Activated CD4-positive, alpha-beta T cell treated with anti-CD3 and anti-CD28 coated beads, Interleukin-2, amount 10 ng/mL, durations not matched to agents 24 days and 14 days (primary cell): ENCODE measurements at regions of chr2 and their contacts with region 1.

Region 1: DNA sequence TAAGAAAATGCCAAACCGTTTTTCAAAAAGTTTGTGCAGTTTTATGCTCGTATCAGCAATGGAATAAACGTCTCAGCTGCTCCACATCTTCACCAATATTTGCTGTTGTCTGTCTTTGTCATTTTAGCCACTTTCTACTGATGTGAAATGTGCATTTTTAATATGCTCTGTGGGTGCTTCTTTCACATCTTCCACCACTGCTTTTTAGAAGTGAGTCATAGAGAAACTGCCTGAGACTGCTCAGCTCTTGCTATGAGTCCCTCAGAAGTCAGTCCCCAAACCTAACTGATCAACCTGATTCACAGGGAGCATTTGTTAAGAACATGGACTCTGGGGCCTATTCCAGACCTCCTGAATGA is 41.0 kb upstream of the EPC2 start:
- DNase-seq: peak; percentile 77
- H3K4me3 Mint-ChIP-seq: no peak overlapping the region
- H3K27ac Mint-ChIP-seq: peak overlapping the region; percentile 93
- H3K4me1 Mint-ChIP-seq: peaks cover 18% of the 10 kb centered on the region
- H3K27me3 Mint-ChIP-seq: peaks cover 8% of the 10 kb centered on the region

Region 2: DNA sequence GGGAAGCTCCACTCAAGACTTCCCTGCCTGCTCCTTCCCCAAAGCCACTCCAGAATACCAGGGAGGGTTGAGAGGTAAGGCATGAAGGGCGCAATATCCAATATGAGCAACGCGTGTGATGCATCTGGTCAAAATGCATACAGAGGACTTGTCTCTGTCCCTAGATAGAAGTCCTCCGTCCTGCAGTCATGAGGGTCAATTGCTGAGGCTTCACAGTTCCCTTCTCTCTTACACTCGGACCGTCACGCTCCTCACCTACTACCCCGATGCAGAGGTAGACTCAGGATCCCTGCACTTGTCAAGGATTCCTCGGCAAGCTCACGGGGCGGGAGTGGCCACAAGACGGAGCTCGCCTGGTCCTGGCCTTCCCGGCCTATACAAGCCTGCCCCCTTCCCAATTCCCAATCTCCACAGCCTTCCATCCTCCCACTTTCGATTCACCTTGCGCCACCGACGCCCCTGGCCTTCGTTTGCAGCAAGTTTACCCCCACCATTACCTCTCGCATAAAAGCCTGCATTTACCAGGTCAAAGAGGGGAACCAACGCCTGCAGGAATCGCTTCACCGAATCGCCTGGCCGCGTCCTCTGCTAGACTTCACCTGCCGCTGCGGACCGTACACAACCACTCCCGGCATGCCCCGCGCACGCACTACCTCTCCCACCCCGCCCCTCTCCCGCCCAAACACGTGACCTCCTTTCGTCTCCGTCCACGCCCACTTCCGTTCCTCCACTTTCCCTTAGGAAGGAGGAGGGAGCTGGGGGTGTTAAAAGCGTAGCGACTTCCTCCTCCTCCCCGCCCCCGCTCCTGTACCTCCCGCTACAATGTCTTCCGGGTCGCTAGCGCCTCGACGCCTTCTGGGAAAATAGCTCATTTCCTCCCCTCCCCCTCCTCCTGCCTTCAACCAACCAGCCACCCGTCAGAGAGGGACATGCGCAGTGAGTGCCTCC is 583.2 kb before region 1 on chr2 and contains the start of gene ORC4:
- intact Hi-C with region 1: loop called (anchors 1 kb)
- DNase-seq: peak; percentile 98
- H3K4me3 Mint-ChIP-seq: peak within 1 kb of the TSS; percentile 94
- H3K27ac Mint-ChIP-seq: peak within 1 kb of the TSS; percentile 93
- H3K4me1 Mint-ChIP-seq: peaks cover 45% of the 10 kb centered on the region
- H3K27me3 Mint-ChIP-seq: no peaks in the 10 kb centered on the region
- total RNA-seq, gene ORC4: 27.0 and 36.2 TPM in 2 replicates

Region 3: GRCh38 chr2:148590612-148591011 is 12.9 kb before region 1 on chr2:
- intact Hi-C with region 1: loop called (anchors 1 kb)
- DNase-seq: no peak
- H3K4me3 Mint-ChIP-seq: no peak overlapping the region
- H3K27ac Mint-ChIP-seq: no peak overlapping the region
- H3K4me1 Mint-ChIP-seq: peaks cover 3% of the 10 kb centered on the region
- H3K27me3 Mint-ChIP-seq: peaks cover 5% of the 10 kb centered on the region

Region 4: DNA sequence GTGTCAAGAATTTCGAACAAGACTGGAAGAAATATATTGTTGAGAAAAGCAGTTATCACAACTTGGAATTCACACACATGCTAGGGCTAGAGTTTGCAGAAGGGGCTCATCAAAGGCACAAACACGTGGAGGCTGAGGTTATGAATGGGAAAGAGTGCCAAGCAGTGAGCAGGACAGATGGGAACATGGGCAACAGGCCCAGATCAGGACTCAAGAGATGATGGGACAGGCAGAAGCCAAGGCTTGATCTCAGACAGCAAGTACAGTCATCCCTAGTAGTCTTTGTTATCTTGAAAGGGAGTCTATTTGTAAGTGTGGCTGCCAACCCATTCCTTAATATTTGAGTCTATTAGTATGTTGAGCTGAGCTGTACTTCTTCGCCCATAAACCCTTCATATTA is 18.8 kb after region 1 on chr2:
- intact Hi-C with region 1: no loop called
- DNase-seq: no peak
- H3K4me3 Mint-ChIP-seq: no peak overlapping the region
- H3K27ac Mint-ChIP-seq: no peak overlapping the region
- H3K4me1 Mint-ChIP-seq: peaks cover 3% of the 10 kb centered on the region
- H3K27me3 Mint-ChIP-seq: peaks cover 6% of the 10 kb centered on the region

Region 5: DNA sequence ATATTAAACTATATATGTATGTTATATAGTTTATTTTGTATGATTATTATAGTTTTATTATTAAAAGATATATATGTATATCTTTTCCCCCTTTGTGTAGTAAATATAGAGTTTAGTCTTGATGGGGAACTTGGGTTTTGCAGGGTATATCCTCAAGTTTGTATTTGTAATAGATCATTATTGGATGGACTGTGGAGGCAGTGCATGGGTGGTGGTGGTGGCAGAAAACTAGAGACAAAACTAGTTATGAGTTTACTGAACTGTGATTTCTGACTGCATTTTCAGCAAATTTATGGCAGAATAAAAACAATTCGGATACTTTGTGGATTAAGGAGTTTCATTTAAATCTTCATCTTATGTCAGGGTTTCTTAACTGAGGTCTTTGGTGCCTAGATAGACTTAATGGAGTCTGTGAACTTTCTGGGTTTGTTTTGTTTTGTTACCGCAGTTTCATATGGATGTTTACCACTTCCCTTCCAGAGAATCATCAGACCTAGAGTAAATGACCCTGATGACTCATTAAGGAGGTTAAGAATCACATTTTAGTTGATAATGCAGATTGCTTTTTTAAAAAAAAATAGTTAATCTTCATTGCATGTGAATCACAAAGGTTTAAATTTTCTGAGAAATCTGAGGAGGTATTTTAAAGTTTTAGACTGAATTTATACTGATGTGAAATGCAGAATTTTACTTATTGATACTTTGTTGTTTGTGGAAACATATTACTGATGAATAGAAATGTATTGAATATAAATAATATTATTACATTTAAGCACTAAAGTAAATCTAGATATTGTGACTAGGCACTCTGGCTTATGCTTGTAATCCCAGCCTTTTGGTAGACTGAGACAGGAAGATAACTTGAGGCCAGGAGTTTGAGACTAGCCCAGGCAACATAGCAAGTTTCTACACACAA is 55.5 kb after region 1 on chr2:
- intact Hi-C with region 1: loop called (anchors 1 kb)
- DNase-seq: peak; percentile 71
- H3K4me3 Mint-ChIP-seq: peak overlapping the region; percentile 65
- H3K27ac Mint-ChIP-seq: peak overlapping the region; percentile 87
- H3K4me1 Mint-ChIP-seq: peaks cover 45% of the 10 kb centered on the region
- H3K27me3 Mint-ChIP-seq: no peaks in the 10 kb centered on the region